ENCODE measurements at regions of chr17 and their contacts with region 1.

Region 1: DNA sequence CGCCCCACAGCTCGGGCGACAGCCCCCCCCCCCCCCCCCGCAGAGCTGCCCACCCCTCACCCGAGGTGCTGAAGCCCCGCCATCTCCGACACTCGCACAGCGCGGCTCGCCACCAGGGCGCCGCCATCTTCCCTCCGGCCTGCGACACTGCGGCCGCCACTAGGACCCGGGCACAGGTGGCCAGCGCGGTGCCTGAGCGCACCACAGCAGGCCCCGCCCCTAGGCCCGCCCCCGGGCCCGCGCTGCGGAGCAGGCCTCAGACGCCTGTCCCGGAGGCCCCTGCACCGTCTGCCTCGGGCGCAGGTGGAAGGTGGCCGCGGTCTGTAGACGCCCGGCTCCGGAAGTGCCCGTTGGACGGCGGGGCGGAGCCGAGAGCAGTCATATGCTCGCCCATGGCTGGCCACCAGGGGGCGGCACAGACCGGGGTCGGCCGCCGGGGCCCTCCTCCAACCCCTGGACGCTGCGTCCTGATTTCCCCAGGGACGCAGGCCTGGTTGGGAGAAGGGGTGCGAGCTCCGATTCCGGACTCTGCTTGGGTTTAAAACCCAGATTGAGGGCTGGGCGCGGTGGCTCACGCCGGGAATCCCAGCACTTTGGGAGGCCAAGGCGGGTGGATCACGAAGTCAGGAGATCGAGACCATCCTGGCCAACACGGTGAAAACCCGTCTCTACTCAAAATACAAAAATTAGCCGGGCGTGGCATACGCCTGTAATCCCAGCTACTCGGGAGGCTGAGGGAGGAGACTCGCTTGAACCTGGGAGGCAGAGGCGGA is at the start of gene MRPL38:
- DNase-seq: peak; percentile 96
- ATAC-seq: peak; percentile 95
- H3K4me3 ChIP-seq: peak within 1 kb of the TSS; percentile 88 to 100
- H3K27ac ChIP-seq: peak within 1 kb of the TSS; percentile 80
- H3K4me1 ChIP-seq: peaks cover 24 to 36% of the 10 kb centered on the region in 2 experiments
- H3K27me3 ChIP-seq: no peaks in the 10 kb centered on the region
- CTCF ChIP-seq: peak; percentile 98
- POLR2A ChIP-seq: peak; percentile 34
- RAD21 ChIP-seq: peak; percentile 100
- total RNA-seq, gene MRPL38: 219 TPM

Region 2: GRCh38 chr17:75927286-75927922 is 22.5 kb after region 1 on chr17:
- CTCF ChIA-PET with region 1: interaction called, 18 read pairs
- POLR2A ChIA-PET with region 1: interaction called, 4 read pairs
- RAD21 ChIA-PET with region 1: no interaction called
- intact Hi-C with region 1: loop called (anchors 1 kb)
- DNase-seq: peak; percentile 46
- ATAC-seq: peak; percentile 94
- H3K4me3 ChIP-seq: no peak overlapping the region
- H3K27ac ChIP-seq: no peak overlapping the region
- H3K4me1 ChIP-seq: peaks cover 0 to 8% of the 10 kb centered on the region in 2 experiments; a peak in 2 of 4 replicates
- H3K27me3 ChIP-seq: no peaks in the 10 kb centered on the region
- CTCF ChIP-seq: peak; percentile 48 to 60 (median 50)
- POLR2A ChIP-seq: no peak
- RAD21 ChIP-seq: peak; percentile 52; the same call in 1 of the 2 replicates

Region 3: DNA sequence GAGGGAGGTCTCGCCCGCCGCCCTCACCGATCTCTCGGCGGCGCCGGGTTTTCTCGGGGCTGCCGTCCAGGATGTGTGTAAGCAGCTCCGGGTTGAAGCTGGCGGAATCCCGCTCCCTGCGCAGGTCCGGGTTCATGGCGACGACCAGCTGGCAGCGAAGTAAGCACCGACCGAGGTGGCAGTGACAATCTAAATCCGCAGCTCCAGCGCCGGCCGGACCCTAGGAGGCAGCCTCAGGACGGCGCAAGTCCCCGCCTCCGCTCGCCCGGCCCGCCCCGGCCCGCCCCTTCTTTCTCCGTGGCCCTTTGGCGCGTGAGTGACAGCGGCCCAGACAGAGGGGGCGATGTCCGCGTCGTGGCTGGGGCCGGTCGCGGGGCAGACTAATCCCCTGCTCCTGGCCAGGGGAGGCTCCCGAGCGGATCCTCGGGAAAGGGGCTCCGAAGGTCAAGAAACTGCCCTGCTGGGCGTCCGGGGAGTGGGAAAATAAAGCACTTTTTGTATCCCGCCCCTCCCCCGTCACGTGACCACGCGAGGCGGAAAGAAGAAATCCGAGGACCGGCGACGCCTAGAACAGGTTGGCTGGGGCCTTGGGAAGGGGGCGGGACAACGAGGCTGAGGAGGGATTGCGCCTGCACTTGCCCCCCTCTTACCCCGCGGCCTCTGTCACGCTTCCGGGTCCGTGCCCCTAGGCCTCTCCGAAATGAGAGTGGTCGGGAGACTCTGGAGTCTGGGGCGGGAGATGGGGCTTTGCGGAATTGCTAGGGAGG is 74.2 kb after region 1 on chr17 and contains the starts of genes ACOX1 and TEN1:
- CTCF ChIA-PET with region 1: interaction called, 4 read pairs
- POLR2A ChIA-PET with region 1: interaction called, 4 read pairs
- RAD21 ChIA-PET with region 1: no interaction called
- intact Hi-C with region 1: loop called (anchors 1 kb)
- DNase-seq: peak; percentile 97
- ATAC-seq: peak; percentile 93
- H3K4me3 ChIP-seq: peak within 1 kb of the TSS; percentile 63 to 95
- H3K27ac ChIP-seq: peak within 1 kb of the TSS; percentile 95
- H3K4me1 ChIP-seq: peaks cover 12 to 32% of the 10 kb centered on the region in 2 experiments
- H3K27me3 ChIP-seq: no peaks in the 10 kb centered on the region
- CTCF ChIP-seq: peak in 2 of 3 experiments; percentile 11 to 21; a peak in 1 of 6 replicates
- POLR2A ChIP-seq: peak; percentile 93
- RAD21 ChIP-seq: no peak
- total RNA-seq, gene ACOX1: 50.2 TPM
- total RNA-seq, gene TEN1: 18.5 TPM

Region 4: DNA sequence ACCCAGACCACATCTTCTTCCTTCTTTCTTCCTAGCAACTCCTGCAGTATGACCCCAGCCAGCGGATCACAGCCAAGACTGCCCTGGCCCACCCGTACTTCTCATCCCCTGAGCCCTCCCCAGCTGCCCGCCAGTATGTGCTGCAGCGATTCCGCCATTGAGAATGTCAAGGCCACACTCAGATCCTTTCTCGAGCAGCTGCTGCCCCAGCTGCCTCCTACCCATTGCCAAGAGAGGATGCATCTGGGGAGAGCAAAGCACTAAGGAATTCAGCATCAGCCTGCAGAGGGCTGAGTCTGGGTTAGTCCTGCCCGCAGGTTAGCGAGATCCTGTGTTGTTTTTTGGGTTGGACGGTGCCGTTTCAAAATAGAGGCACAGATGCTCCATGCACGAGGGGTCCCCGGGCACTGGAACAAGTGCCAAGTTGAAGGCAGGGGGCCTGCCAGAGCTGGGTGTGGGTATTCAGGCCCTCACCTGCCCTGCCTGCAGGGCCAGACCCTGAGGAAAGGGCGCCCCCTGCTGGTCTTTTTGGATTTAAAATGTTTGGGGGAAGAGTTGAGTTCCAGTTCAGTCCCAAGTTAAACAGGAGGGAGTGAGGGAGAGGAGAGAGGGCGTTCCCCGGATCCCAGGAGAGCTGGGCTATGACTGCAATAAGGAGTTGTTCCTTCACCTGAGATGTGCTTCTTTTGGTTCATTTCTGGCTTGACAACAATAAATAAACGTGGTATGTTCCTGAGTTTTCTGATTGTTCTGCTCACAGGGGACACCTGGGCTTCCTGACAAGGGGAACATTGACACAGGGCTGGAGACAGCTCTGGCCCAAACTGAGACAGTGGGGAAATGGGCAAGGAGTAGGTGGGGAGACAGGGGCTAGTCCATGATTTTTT is 100.6 kb after region 1 on chr17:
- CTCF ChIA-PET with region 1: interaction called, 68 read pairs
- POLR2A ChIA-PET with region 1: interaction called, 11 read pairs
- RAD21 ChIA-PET with region 1: interaction called, 5 to 7 read pairs
- intact Hi-C with region 1: loop called (anchors 1 kb)
- DNase-seq: peak; percentile 56
- ATAC-seq: peak; percentile 82
- H3K4me3 ChIP-seq: no peak overlapping the region
- H3K27ac ChIP-seq: peak overlapping the region; percentile 16; the same call in 1 of the 2 replicates
- H3K4me1 ChIP-seq: peaks cover 0 to 16% of the 10 kb centered on the region in 2 experiments; a peak in 2 of 4 replicates
- H3K27me3 ChIP-seq: no peaks in the 10 kb centered on the region
- CTCF ChIP-seq: peak; percentile 70 to 99 (median 92)
- POLR2A ChIP-seq: no peak
- RAD21 ChIP-seq: peak; percentile 97

Region 5: DNA sequence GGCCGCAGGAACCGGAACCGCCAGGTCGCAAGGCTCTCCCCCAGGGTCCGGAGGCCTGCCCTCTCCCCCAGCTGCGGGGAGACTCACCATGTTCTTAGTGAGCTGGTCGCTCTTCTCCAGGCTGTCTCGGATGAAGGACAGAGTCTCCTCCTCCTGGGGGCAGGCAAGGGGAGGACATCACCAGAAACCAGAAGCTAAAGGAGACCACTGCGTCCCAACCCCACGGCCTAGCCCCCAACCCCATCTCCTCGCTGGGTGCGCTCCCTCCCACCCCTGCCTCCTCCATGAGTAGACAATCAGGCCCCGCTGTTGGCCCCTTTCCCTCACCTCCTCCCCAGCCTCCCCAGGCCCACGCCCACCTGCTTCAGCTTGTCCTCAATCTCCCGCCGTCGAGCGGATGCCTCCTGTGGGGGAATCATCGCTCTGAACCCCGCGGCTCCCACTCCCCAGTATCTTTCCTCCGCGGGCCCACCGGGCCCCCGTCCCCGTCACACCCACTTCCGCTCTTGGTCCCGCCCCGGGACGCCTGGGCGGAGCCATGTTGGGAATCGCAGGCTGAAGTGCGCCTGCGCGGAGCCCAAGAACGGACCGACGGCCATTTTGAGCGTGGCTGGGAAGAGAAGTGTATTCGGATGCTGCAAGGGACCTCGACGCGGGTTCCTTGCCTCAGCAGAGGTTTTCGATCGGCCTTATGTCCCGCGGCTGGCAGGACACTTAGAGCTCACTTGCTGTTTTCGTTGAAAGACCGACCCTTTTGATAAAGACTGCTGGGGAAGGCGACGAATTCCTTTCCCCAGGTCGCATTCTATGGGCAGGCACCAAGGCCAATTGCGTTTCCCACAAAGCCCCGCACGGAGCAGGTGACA is 198.6 kb after region 1 on chr17 and contains the start of gene EXOC7:
- CTCF ChIA-PET with region 1: no interaction called
- POLR2A ChIA-PET with region 1: no interaction called
- RAD21 ChIA-PET with region 1: no interaction called
- intact Hi-C with region 1: loop called (anchors 10 kb)
- DNase-seq: peak; percentile 90
- ATAC-seq: peak; percentile 83
- H3K4me3 ChIP-seq: peak within 1 kb of the TSS; percentile 78 to 95
- H3K27ac ChIP-seq: peak within 1 kb of the TSS; percentile 89
- H3K4me1 ChIP-seq: peaks cover 12 to 26% of the 10 kb centered on the region in 2 experiments
- H3K27me3 ChIP-seq: no peaks in the 10 kb centered on the region
- CTCF ChIP-seq: no peak
- POLR2A ChIP-seq: peak; percentile 98
- RAD21 ChIP-seq: no peak
- total RNA-seq, gene EXOC7: 114 TPM

Region 6: GRCh38 chr17:76191896-76192295 is 287.0 kb after region 1 on chr17:
- CTCF ChIA-PET with region 1: no interaction called
- POLR2A ChIA-PET with region 1: no interaction called
- RAD21 ChIA-PET with region 1: no interaction called
- intact Hi-C with region 1: no loop called
- DNase-seq: no peak
- ATAC-seq: no peak
- H3K4me3 ChIP-seq: no peak overlapping the region
- H3K27ac ChIP-seq: no peak overlapping the region
- H3K4me1 ChIP-seq: peaks cover 3 to 4% of the 10 kb centered on the region in 2 experiments; a peak in 2 of 4 replicates
- H3K27me3 ChIP-seq: no peaks in the 10 kb centered on the region
- CTCF ChIP-seq: no peak
- POLR2A ChIP-seq: no peak
- RAD21 ChIP-seq: no peak

Measured in HCT116 (cell line).